HepG2 (cell line): ENCODE measurements at regions of chr9 and their contacts with region 1.

Region 1: GRCh38 chr9:124721109-124721906 is 49.8 kb downstream of the NR6A1 start:
- DNase-seq: peak; percentile 90
- ATAC-seq: peak; percentile 91
- H3K4me3 ChIP-seq: peak overlapping the region in 1 of 3 experiments; percentile 13; a peak in 1 of 6 replicates
- H3K27ac ChIP-seq: peak overlapping the region; percentile 58
- H3K4me1 ChIP-seq: peaks cover 61% of the 10 kb centered on the region
- H3K27me3 ChIP-seq: no peaks in the 10 kb centered on the region
- CTCF ChIP-seq: no peak
- EP300 ChIP-seq: peak in 1 of 2 experiments; percentile 79; a peak in 2 of 4 replicates
- POLR2A ChIP-seq: no peak
- RAD21 ChIP-seq: no peak

Region 2: DNA sequence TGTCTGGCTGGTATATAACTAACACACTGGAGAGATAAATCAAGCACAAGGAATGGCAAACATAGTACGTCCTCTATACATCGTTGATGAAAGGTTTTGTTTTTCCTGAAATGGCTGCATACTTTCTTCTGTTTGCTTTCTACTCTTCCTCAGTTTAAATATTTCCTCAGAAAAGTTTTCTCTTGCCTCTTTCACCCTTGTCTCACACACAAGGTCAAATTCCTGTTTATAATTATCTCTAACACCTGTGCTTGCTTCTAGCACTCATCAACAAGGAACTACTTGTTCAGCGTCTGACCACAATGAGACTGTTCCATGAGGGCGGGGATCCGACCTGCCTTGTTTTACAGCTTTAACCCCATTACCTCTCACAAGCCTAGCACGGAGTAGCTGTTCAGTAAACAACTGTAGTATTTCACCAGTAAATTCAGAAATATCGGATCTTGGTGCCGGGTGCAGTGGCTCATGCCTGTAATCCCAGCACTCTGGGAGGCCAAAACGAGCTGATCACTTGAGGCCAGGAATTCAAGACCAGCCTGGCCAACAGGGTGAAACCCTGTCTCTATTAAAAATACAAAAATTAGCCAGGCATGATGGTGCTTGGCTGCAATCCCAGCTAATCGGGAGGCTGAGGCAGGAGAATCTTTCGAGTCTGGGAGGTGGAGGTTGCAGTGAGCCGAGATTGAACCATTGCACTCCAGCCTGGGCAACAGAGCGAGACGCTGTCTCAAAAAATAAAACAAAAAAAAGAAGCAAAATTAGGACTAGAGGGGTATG is 12.8 kb after region 1 on chr9:
- CTCF ChIA-PET with region 1: no interaction called
- POLR2A ChIA-PET with region 1: interaction called, 16 read pairs
- in situ Hi-C with region 1: no loop called
- intact Hi-C with region 1: no loop called
- DNase-seq: peak; percentile 94
- ATAC-seq: peak; percentile 95
- H3K4me3 ChIP-seq: peak overlapping the region in 2 of 3 experiments; percentile 26 to 31; a peak in 2 of 6 replicates
- H3K27ac ChIP-seq: peak overlapping the region; percentile 64
- H3K4me1 ChIP-seq: peaks cover 45% of the 10 kb centered on the region
- H3K27me3 ChIP-seq: no peaks in the 10 kb centered on the region; a peak in 1 of 5 replicates
- CTCF ChIP-seq: no peak
- EP300 ChIP-seq: peak in 1 of 2 experiments; percentile 80; a peak in 2 of 4 replicates
- POLR2A ChIP-seq: no peak
- RAD21 ChIP-seq: no peak

Region 3: GRCh38 chr9:124818431-124819281 is 97.3 kb after region 1 on chr9:
- CTCF ChIA-PET with region 1: no interaction called
- POLR2A ChIA-PET with region 1: no interaction called
- in situ Hi-C with region 1: no loop called
- intact Hi-C with region 1: no loop called
- DNase-seq: peak; percentile 90
- ATAC-seq: peak; percentile 91
- H3K4me3 ChIP-seq: peak overlapping the region; percentile 48 to 72 (median 54)
- H3K27ac ChIP-seq: peak overlapping the region; percentile 63
- H3K4me1 ChIP-seq: peaks cover 46% of the 10 kb centered on the region
- H3K27me3 ChIP-seq: no peaks in the 10 kb centered on the region
- CTCF ChIP-seq: no peak; the same call in 1 of the 2 replicates
- EP300 ChIP-seq: 0 out of 4 replicates have a peak, but pooled peaks have one; percentile 13 to 19
- POLR2A ChIP-seq: peak; percentile 41 to 67; a peak in 3 of 4 replicates
- RAD21 ChIP-seq: 0 out of 2 replicates have a peak, but pooled peaks have one; percentile 29